Ascending aorta (tissue), 2 donors: ENCODE measurements at regions of chr5 and their contacts with region 1.

Region 1: GRCh38 chr5:145975361-145976066 is 39.1 kb downstream of the SH3RF2 start:
- DNase-seq: peak in 1 of 2 donors; percentile 76
- H3K4me3 ChIP-seq: no peak overlapping the region
- H3K27ac ChIP-seq: peak overlapping the region; percentile 75 to 89
- H3K4me1 ChIP-seq: peaks cover 18 to 23% of the 10 kb centered on the region in 2 donors
- H3K27me3 ChIP-seq: no peaks in the 10 kb centered on the region
- CTCF ChIP-seq: no peak

Region 2: GRCh38 chr5:145834917-145835847 is 140.3 kb before region 1 on chr5 and contains the start of gene PRELID2:
- intact Hi-C with region 1: loop called (anchors 1 kb)
- DNase-seq: peak; percentile 56 to 93
- H3K4me3 ChIP-seq: peak within 1 kb of the TSS; percentile 77
- H3K27ac ChIP-seq: peak within 1 kb of the TSS; percentile 82 to 90
- H3K4me1 ChIP-seq: peaks cover 0 to 18% of the 10 kb centered on the region in 2 donors
- H3K27me3 ChIP-seq: no peaks in the 10 kb centered on the region
- CTCF ChIP-seq: no peak
- total RNA-seq, gene PRELID2: 23.5 TPM

Region 3: DNA sequence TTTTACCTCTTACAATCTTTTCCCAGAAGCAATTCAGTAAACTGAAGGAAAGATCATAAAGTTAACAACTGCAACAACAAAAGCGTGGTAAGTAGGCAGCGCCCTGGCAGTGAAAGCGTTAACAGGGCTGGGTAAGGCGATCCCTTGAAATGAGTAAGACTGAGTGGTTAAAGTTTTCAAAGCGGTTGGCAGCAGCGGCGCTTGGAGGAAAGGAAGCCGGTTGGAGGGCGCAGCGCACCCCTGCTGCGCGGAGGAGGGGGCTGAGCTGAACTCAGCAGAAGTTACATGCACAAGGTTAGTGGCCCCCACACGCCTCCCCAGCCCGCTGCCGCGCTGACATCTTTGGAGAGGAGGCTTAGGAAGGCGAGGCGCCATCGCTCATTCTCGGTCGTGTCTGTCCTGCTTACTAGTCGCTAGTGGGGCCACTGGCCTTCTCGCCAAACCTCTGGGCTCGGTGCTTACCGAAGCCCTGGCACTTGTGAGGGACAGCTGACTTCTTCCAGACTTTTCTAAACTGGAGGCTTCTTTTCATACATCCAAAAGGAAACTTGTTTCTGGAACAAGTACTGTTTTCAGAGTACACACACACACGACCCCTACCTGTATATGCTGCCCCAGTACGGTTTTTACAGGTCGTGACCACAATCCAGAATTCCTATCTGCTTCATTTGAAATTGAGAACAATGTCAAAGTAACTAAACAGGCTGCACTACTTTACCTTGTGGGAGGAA is 38.9 kb before region 1 on chr5 and contains the start of gene SH3RF2:
- intact Hi-C with region 1: loop called (anchors 2 kb)
- DNase-seq: peak in 1 of 2 donors; percentile 82
- H3K4me3 ChIP-seq: peak within 1 kb of the TSS; percentile 65 to 72
- H3K27ac ChIP-seq: peak within 1 kb of the TSS; percentile 58 to 64
- H3K4me1 ChIP-seq: no peaks in the 10 kb centered on the region
- H3K27me3 ChIP-seq: no peaks in the 10 kb centered on the region
- CTCF ChIP-seq: no peak
- total RNA-seq, gene SH3RF2: 50.6 TPM

Region 4: GRCh38 chr5:145951071-145951470 is 24.4 kb before region 1 on chr5:
- intact Hi-C with region 1: no loop called
- DNase-seq: no peak
- H3K4me3 ChIP-seq: no peak overlapping the region
- H3K27ac ChIP-seq: no peak overlapping the region
- H3K4me1 ChIP-seq: no peaks in the 10 kb centered on the region
- H3K27me3 ChIP-seq: no peaks in the 10 kb centered on the region
- CTCF ChIP-seq: no peak

Region 5: GRCh38 chr5:146001544-146002185 is 26.2 kb after region 1 on chr5:
- intact Hi-C with region 1: loop called (anchors 2 kb)
- DNase-seq: no peak
- H3K4me3 ChIP-seq: no peak overlapping the region
- H3K27ac ChIP-seq: no peak overlapping the region
- H3K4me1 ChIP-seq: peaks cover 0 to 10% of the 10 kb centered on the region in 2 donors
- H3K27me3 ChIP-seq: no peaks in the 10 kb centered on the region
- CTCF ChIP-seq: no peak